HepG2 (cell line): ENCODE measurements at regions of chr14 and their contacts with region 1.

Region 1: GRCh38 chr14:21257394-21257909 is 11.8 kb downstream of the HNRNPC start:
- DNase-seq: no peak
- ATAC-seq: peak; percentile 36
- H3K4me3 ChIP-seq: no peak overlapping the region
- H3K27ac ChIP-seq: peak overlapping the region; percentile 1
- H3K4me1 ChIP-seq: peaks cover 78% of the 10 kb centered on the region
- H3K27me3 ChIP-seq: no peaks in the 10 kb centered on the region
- CTCF ChIP-seq: no peak
- EP300 ChIP-seq: no peak
- POLR2A ChIP-seq: peak in 1 of 2 experiments; percentile 63; a peak in 2 of 4 replicates
- RAD21 ChIP-seq: no peak

Region 2: DNA sequence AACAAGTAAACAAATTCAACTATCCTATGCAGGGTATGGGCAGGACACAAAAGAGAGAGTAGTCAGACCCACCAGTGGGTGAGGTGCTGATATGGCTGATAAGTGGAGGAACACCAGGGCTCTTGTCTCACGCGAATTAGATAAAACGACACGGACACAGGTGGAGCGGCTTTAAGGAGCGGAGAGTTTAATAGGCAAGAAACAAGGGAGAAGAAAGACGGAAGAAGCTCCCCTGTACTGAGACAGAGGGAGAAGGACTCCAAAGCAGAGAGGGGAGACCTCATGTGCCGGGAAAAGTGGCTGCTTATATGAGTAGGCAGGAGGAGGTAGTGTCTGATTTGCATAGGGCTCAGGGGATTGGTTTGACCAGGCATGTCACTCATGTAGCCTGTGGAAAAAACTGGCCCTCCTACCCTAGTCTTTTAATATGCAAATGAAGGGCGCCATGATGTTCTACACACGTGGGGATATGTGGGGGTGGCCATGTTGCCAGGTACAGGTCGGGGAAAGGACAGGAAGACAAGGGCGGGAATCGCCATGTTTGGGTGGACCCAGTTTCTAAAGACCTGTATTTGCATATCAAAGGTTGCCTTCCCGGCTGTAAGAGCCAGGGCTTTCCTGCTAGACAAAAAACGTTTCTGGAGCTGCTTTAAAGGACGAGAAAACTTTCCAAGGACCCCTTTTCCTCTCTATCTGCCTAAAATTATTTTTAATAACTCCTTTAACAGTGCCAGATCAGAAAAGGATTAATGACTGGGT is 51.2 kb after region 1 on chr14:
- CTCF ChIA-PET with region 1: no interaction called
- POLR2A ChIA-PET with region 1: interaction called, 11 read pairs
- in situ Hi-C with region 1: no loop called
- intact Hi-C with region 1: no loop called
- DNase-seq: peak; percentile 100
- ATAC-seq: peak; percentile 95
- H3K4me3 ChIP-seq: peak overlapping the region; percentile 50 to 70 (median 59)
- H3K27ac ChIP-seq: peak overlapping the region; percentile 88
- H3K4me1 ChIP-seq: peaks cover 37% of the 10 kb centered on the region
- H3K27me3 ChIP-seq: no peaks in the 10 kb centered on the region; a peak in 1 of 5 replicates
- CTCF ChIP-seq: no peak
- EP300 ChIP-seq: 0 out of 4 replicates have a peak, but pooled peaks of 1 of the 2 experiments have one; percentile 12
- POLR2A ChIP-seq: peak; percentile 94 to 95
- RAD21 ChIP-seq: no peak